ENCODE measurements at regions of chr12 and their contacts with region 1.

Region 1: GRCh38 chr12:50326636-50327284 is 43.4 kb upstream of the LIMA1 start:
- DNase-seq: peak; percentile 72
- ATAC-seq: peak; percentile 56
- H3K4me3 ChIP-seq: no peak overlapping the region
- H3K27ac ChIP-seq: no peak overlapping the region
- H3K4me1 ChIP-seq: peaks cover 10% of the 10 kb centered on the region
- H3K27me3 ChIP-seq: no peaks in the 10 kb centered on the region
- CTCF ChIP-seq: no peak
- POLR2A ChIP-seq: no peak
- RAD21 ChIP-seq: no peak

Region 2: DNA sequence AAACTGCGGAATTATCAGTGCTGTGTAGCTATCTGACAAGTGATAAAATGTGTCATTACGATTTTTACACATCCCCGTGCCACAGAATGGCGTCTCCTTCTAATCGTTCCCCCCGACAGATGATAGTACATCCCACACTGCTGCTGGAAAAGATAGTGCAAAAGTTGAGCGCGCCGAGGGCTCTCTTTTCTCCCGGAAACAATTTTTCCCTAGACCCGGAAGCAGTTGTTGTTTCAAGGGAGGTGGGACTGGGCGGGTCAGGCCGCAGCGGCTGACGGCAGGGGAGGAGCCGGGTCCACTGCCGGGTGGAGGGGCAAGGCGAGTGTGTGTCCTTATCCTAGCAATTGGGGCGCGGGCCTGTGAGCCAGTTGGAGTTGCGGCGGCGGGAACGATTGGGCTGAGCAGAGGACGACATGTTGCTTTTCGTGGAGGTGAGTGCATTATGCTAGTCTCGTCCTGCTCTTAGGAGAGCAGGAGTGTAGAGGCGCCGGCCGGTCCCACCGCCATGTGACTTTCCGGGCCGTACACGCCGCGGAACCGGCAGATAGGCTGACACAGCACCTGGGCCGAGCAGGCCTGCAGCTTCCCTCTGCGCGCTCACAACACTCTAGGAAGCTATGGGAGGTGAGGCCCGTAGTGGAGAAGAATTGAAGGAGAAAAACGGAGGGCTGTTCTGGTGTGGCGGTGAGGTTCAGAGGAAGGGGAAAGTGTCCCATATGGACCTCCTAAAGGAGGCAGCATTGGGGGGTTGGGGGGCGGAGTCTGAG is 74.0 kb after region 1 on chr12 and contains the start of gene LARP4:
- CTCF ChIA-PET with region 1: no interaction called
- POLR2A ChIA-PET with region 1: no interaction called
- dilution Hi-C with region 1: no loop called
- in situ Hi-C with region 1: no loop called
- intact Hi-C with region 1: loop called (anchors 5 kb)
- DNase-seq: peak; percentile 92
- ATAC-seq: peak; percentile 97
- H3K4me3 ChIP-seq: peak within 1 kb of the TSS; percentile 81
- H3K27ac ChIP-seq: peak within 1 kb of the TSS; percentile 89
- H3K4me1 ChIP-seq: peaks cover 3% of the 10 kb centered on the region
- H3K27me3 ChIP-seq: no peaks in the 10 kb centered on the region
- CTCF ChIP-seq: no peak
- POLR2A ChIP-seq: peak; percentile 85
- RAD21 ChIP-seq: no peak
- total RNA-seq, gene LARP4: 41.7 and 42.5 TPM in 2 replicates

Measured in IMR-90 (cell line).